Sciatic nerve (tissue), 2 donors: ENCODE measurements at regions of chr4 and their contacts with region 1.

Region 1: GRCh38 chr4:131288441-131288840 is 1860.7 kb upstream of the PCDH10 start:
- DNase-seq: no peak
- ATAC-seq: no peak

Region 2: GRCh38 chr4:131499141-131499873 is 210.9 kb after region 1 on chr4:
- intact Hi-C with region 1: no loop called
- DNase-seq: no peak
- ATAC-seq: no peak

Region 3: GRCh38 chr4:132123870-132124623 is 835.6 kb after region 1 on chr4:
- intact Hi-C with region 1: loop called (anchors 5 kb)
- DNase-seq: no peak
- ATAC-seq: no peak

Region 4: GRCh38 chr4:132502096-132502552 is 1213.7 kb after region 1 on chr4:
- intact Hi-C with region 1: no loop called
- DNase-seq: no peak
- ATAC-seq: no peak

Region 5: GRCh38 chr4:133162941-133163340 is 1874.5 kb after region 1 on chr4:
- intact Hi-C with region 1: no loop called
- DNase-seq: no peak
- ATAC-seq: no peak